Aorta (tissue), 5 donors: ENCODE measurements at regions of chr1 and their contacts with region 1.

Region 1: DNA sequence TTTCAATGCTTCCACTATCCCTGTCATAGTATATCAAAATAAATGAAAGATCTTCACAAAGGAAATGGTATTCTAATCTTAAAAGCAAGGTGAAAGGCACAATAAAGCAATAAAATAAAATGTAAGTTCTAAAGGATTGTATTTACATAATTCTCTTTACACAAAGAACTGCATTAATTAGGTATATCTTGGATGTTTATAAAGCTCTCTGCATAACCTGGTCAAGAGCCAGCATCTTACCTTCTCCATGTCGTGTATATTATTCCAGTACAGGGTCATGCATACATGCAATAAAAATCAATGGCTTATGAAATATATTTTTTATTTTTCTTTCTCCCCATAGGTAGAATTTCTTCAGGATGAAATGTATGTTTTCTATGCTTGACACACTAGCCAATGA is 63.8 kb downstream of the GON4L start:
- DNase-seq: no peak
- ATAC-seq: no peak
- H3K4me3 ChIP-seq: no peak overlapping the region
- H3K27ac ChIP-seq: no peak overlapping the region
- H3K4me1 ChIP-seq: no peaks in the 10 kb centered on the region
- H3K27me3 ChIP-seq: no peaks in the 10 kb centered on the region

Region 2: DNA sequence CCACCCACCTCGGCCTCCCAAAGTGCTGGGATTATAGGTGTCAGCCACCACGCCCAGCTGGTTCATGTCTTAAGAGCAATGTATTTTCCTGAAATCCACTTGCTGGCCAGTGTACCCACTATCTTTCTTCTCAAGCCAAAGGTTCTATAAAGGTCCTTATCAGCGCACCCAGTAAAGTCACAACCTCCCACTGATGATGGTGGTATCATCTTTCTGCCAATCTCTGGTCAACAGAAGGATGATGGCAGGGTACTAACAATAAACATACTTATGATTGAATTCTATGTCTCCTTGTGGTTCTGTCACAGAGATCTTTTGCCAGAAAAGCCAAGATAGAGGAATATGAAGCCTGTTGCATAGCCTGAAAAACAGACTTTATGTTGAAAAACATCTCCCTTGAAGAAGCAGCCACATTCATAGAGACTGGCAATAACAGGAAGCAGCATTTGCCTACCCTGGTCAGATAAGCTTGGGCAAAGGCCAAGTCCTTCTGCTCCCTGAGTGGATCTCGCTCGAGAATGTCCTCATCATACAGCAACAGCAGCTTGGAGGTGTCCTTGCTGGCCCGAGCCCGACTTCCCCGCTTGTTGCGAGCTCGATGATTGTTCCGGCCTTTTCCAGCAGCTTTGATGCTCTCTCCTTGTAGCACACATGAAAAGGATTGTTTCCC is 31.3 kb before region 1 on chr1:
- intact Hi-C with region 1: loop called in 1 of 2 experiments (anchors 2 kb)
- DNase-seq: peak in 1 of 2 donors; percentile 45
- ATAC-seq: no peak
- H3K4me3 ChIP-seq: no peak overlapping the region
- H3K27ac ChIP-seq: no peak overlapping the region
- H3K4me1 ChIP-seq: no peaks in the 10 kb centered on the region
- H3K27me3 ChIP-seq: no peaks in the 10 kb centered on the region

Region 3: GRCh38 chr1:155931332-155932038 is 138.3 kb after region 1 on chr1:
- intact Hi-C with region 1: no loop called
- DNase-seq: no peak
- ATAC-seq: no peak
- H3K4me3 ChIP-seq: no peak overlapping the region
- H3K27ac ChIP-seq: peak overlapping the region in 1 of 2 donors; percentile 17
- H3K4me1 ChIP-seq: no peaks in the 10 kb centered on the region
- H3K27me3 ChIP-seq: no peaks in the 10 kb centered on the region